ENCODE measurements at regions of chr9 and their contacts with region 1.

Region 1: DNA sequence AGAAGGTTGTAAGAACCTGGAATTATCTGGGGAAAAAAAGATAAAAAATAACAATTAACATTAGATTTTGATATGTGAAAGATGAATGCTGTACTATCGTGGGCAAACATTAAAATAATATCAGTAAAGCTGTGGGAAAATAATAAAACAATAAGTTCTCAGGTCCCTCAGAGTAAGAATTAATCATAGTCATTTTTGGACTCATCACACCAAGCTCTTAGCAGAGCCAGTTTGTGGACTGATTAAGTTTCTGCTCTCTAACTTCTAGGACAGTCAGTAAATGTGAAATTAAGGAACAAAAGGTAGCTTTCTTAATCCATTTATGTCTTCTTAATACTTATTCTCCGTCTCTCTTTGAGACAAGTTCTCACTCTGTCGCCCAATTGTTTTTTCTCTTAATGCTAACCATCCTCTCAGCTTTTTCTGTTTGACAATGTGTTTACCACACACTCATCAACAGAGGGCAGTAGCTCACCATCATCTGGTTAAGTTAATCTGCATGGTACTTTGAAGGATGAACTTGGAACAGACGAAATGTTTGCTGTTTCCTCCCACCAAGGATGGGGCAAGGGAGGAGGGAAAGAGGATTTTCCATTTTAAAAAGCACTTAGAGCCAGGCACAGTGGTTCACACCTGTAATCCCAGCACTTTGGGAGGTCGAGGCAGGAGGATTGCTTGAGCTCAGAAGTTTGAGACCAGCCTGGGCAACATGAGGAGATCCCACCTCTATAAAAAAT is 5.3 kb upstream of the ACO1 start:
- DNase-seq: peak in 1 of 3 donors; percentile 56
- ATAC-seq: peak; percentile 80 to 86 (median 84)
- H3K4me3 ChIP-seq: no peak overlapping the region
- H3K27ac ChIP-seq: no peak overlapping the region
- H3K4me1 ChIP-seq: peaks cover 0 to 20% (median 6%) of the 10 kb centered on the region in 4 donors
- H3K27me3 ChIP-seq: no peaks in the 10 kb centered on the region
- CTCF ChIP-seq: peak; percentile 73 to 95 (median 80)
- POLR2A ChIP-seq: no peak

Region 2: GRCh38 chr9:32431940-32432555 is 52.9 kb after region 1 on chr9:
- intact Hi-C with region 1: loop called in 1 of 2 experiments (anchors 5 kb)
- DNase-seq: no peak
- ATAC-seq: peak; percentile 36 to 72 (median 58)
- H3K4me3 ChIP-seq: no peak overlapping the region
- H3K27ac ChIP-seq: no peak overlapping the region
- H3K4me1 ChIP-seq: peaks cover 0 to 13% (median 4%) of the 10 kb centered on the region in 4 donors
- H3K27me3 ChIP-seq: no peaks in the 10 kb centered on the region
- CTCF ChIP-seq: peak; percentile 43 to 56 (median 46)
- POLR2A ChIP-seq: no peak

Region 3: GRCh38 chr9:32526041-32526706 is 147.0 kb after region 1 on chr9 and contains the start of gene RIGI:
- intact Hi-C with region 1: loop called in 1 of 2 experiments (anchors 5 kb)
- DNase-seq: peak; percentile 96 to 97 (median 97)
- ATAC-seq: peak; percentile 92 to 96 (median 94)
- H3K4me3 ChIP-seq: peak within 1 kb of the TSS; percentile 65 to 74 (median 68)
- H3K27ac ChIP-seq: peak within 1 kb of the TSS; percentile 84 to 91 (median 87)
- H3K4me1 ChIP-seq: peaks cover 0 to 24% (median 9%) of the 10 kb centered on the region in 4 donors
- H3K27me3 ChIP-seq: no peaks in the 10 kb centered on the region
- CTCF ChIP-seq: peak; percentile 48 to 66 (median 58)
- POLR2A ChIP-seq: peak; percentile 79
- total RNA-seq, gene RIGI: 2.7 to 6.1 (median 4.8) TPM

Region 4: GRCh38 chr9:32571969-32572899 is 193.1 kb after region 1 on chr9:
- intact Hi-C with region 1: loop called (anchors 5 kb)
- DNase-seq: peak in 1 of 3 donors; percentile 49
- ATAC-seq: peak; percentile 78 to 92 (median 86)
- H3K4me3 ChIP-seq: peak overlapping the region; percentile 67 to 95 (median 86)
- H3K27ac ChIP-seq: peak overlapping the region; percentile 84 to 86 (median 84)
- H3K4me1 ChIP-seq: peaks cover 0 to 17% (median 4%) of the 10 kb centered on the region in 4 donors
- H3K27me3 ChIP-seq: no peaks in the 10 kb centered on the region
- CTCF ChIP-seq: peak; percentile 55 to 62 (median 56)
- POLR2A ChIP-seq: no peak

Region 5: DNA sequence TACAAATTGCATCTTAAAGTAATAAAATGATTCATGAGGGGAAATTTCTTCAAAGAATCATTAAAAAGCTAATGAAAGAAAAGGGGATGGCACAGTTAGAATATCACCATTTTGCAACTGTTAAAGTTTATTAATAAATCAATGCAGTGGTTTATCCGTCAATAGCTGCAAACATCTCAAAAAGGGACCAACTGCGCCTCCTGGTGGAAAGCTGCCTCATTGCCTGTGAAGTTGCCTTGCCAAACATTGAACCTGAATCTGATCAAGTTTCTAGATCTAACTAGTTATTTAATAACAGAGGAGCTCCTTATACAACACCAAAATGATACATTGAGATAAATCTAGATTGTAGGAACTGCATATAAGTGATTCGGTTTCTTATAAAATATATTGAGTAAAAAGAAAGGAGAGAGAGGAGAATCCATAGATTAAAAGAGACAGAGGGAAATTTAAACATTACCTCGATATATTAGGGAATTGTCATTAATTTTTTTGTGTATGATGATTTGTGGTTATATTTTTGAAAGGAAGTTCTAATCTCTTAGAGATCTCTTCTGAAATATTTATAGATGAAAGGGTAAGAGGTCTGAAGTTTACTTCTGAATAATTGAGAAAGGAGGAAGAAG is 200.7 kb after region 1 on chr9:
- intact Hi-C with region 1: loop called in 1 of 2 experiments (anchors 5 kb)
- DNase-seq: peak; percentile 71 to 72 (median 71)
- ATAC-seq: peak; percentile 83 to 92 (median 90)
- H3K4me3 ChIP-seq: no peak overlapping the region
- H3K27ac ChIP-seq: no peak overlapping the region
- H3K4me1 ChIP-seq: no peaks in the 10 kb centered on the region
- H3K27me3 ChIP-seq: no peaks in the 10 kb centered on the region
- CTCF ChIP-seq: peak; percentile 87 to 96 (median 92)
- POLR2A ChIP-seq: no peak